Naive thymus-derived CD4-positive, alpha-beta T cell (primary cell): ENCODE measurements at regions of chr22 and their contacts with region 1.

Region 1: DNA sequence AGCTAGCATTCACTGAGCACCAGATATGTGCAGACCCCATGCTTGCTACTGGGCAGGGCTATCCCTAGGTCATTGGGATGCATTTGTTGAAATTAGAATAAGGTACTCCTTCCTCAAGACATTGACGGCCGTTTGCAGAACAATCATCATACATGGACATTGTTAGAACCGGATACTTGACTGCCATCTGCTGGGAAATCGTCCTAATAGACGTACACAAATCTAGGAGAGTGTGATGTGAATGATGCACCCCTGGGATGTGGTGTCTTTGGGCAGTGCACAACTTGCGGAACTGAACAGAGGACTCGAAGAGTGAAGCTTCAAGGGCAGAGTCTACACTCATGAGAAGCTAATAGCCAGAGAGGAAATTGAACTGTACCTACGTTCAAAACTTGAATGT is 35.9 kb downstream of the MYO18B start:
- DNase-seq: no peak
- ATAC-seq: no peak
- H3K4me3 ChIP-seq: no peak overlapping the region
- H3K4me3 Mint-ChIP-seq: no peak overlapping the region
- H3K27ac ChIP-seq: no peak overlapping the region
- H3K27ac Mint-ChIP-seq: no peak overlapping the region
- H3K4me1 ChIP-seq: no peaks in the 10 kb centered on the region
- H3K4me1 Mint-ChIP-seq: peaks cover 0 to 15% (median 3%) of the 10 kb centered on the region in 7 donors
- H3K27me3 ChIP-seq: no peaks in the 10 kb centered on the region
- H3K27me3 Mint-ChIP-seq: peaks cover 0 to 9% (median 4%) of the 10 kb centered on the region in 5 donors

Region 2: GRCh38 chr22:25465949-25466348 is 311.9 kb before region 1 on chr22:
- CTCF ChIA-PET with region 1: interaction called, 8 read pairs
- POLR2A ChIA-PET with region 1: no interaction called
- intact Hi-C with region 1: loop called in 1 of 2 experiments (anchors 1 kb)
- DNase-seq: no peak
- ATAC-seq: no peak
- H3K4me3 ChIP-seq: no peak overlapping the region
- H3K4me3 Mint-ChIP-seq: no peak overlapping the region
- H3K27ac ChIP-seq: no peak overlapping the region
- H3K27ac Mint-ChIP-seq: peak overlapping the region in 1 of 9 donors; percentile 24
- H3K4me1 ChIP-seq: no peaks in the 10 kb centered on the region
- H3K4me1 Mint-ChIP-seq: peaks cover 0 to 16% (median 4%) of the 10 kb centered on the region in 7 donors
- H3K27me3 ChIP-seq: no peaks in the 10 kb centered on the region
- H3K27me3 Mint-ChIP-seq: no peaks in the 10 kb centered on the region

Region 3: GRCh38 chr22:25540166-25540907 is 237.5 kb before region 1 on chr22:
- CTCF ChIA-PET with region 1: no interaction called
- POLR2A ChIA-PET with region 1: no interaction called
- intact Hi-C with region 1: loop called (anchors 1 to 5 kb)
- DNase-seq: no peak
- ATAC-seq: no peak
- H3K4me3 ChIP-seq: no peak overlapping the region
- H3K4me3 Mint-ChIP-seq: no peak overlapping the region
- H3K27ac ChIP-seq: no peak overlapping the region
- H3K27ac Mint-ChIP-seq: no peak overlapping the region
- H3K4me1 ChIP-seq: no peaks in the 10 kb centered on the region
- H3K4me1 Mint-ChIP-seq: peaks cover 0 to 12% (median 0%) of the 10 kb centered on the region in 7 donors
- H3K27me3 ChIP-seq: no peaks in the 10 kb centered on the region
- H3K27me3 Mint-ChIP-seq: peaks cover 0 to 13% (median 6%) of the 10 kb centered on the region in 5 donors

Region 4: GRCh38 chr22:25546751-25547150 is 231.1 kb before region 1 on chr22:
- CTCF ChIA-PET with region 1: no interaction called
- POLR2A ChIA-PET with region 1: no interaction called
- intact Hi-C with region 1: loop called (anchors 1 to 5 kb)
- DNase-seq: no peak
- ATAC-seq: peak; percentile 70
- H3K4me3 ChIP-seq: no peak overlapping the region
- H3K4me3 Mint-ChIP-seq: no peak overlapping the region
- H3K27ac ChIP-seq: no peak overlapping the region
- H3K27ac Mint-ChIP-seq: peak overlapping the region in 1 of 9 donors; percentile 14
- H3K4me1 ChIP-seq: no peaks in the 10 kb centered on the region
- H3K4me1 Mint-ChIP-seq: peaks cover 0 to 45% (median 0%) of the 10 kb centered on the region in 7 donors
- H3K27me3 ChIP-seq: no peaks in the 10 kb centered on the region
- H3K27me3 Mint-ChIP-seq: peaks cover 0 to 11% (median 0%) of the 10 kb centered on the region in 5 donors

Region 5: GRCh38 chr22:25736378-25737011 is 41.4 kb before region 1 on chr22:
- CTCF ChIA-PET with region 1: no interaction called
- POLR2A ChIA-PET with region 1: no interaction called
- intact Hi-C with region 1: loop called in 1 of 2 experiments (anchors 1 kb)
- DNase-seq: peak in 7 of 9 donors; percentile 48 to 66 (median 57)
- ATAC-seq: peak; percentile 36
- H3K4me3 ChIP-seq: peak overlapping the region; percentile 31
- H3K4me3 Mint-ChIP-seq: peak overlapping the region; percentile 47 to 81 (median 70)
- H3K27ac ChIP-seq: no peak overlapping the region
- H3K27ac Mint-ChIP-seq: peak overlapping the region; percentile 51 to 98 (median 84)
- H3K4me1 ChIP-seq: peaks cover 0 to 13% of the 10 kb centered on the region in 2 donors
- H3K4me1 Mint-ChIP-seq: peaks cover 7 to 64% (median 21%) of the 10 kb centered on the region in 7 donors
- H3K27me3 ChIP-seq: no peaks in the 10 kb centered on the region
- H3K27me3 Mint-ChIP-seq: no peaks in the 10 kb centered on the region

Region 6: DNA sequence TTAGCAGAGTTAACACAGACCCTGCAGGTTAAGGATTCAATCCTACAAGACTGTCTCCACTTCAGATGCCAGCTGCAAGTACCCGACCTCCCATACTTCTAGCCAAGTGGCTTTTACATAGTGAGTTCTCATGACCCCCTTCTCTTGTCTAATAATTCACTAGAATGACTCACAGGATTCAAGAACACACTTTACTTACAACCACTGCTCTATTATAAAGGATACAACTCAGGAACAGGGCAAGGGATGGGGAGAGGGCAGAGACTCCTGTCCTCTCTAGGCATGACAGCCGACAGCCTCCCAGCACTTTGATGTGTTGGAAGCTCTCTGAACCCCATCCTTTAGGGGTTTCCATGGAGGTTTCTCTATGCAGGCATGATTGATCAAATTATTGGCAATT is 24.1 kb after region 1 on chr22:
- CTCF ChIA-PET with region 1: no interaction called
- POLR2A ChIA-PET with region 1: no interaction called
- intact Hi-C with region 1: no loop called
- DNase-seq: no peak
- ATAC-seq: no peak
- H3K4me3 ChIP-seq: no peak overlapping the region
- H3K4me3 Mint-ChIP-seq: no peak overlapping the region
- H3K27ac ChIP-seq: no peak overlapping the region
- H3K27ac Mint-ChIP-seq: no peak overlapping the region
- H3K4me1 ChIP-seq: no peaks in the 10 kb centered on the region
- H3K4me1 Mint-ChIP-seq: no peaks in the 10 kb centered on the region
- H3K27me3 ChIP-seq: no peaks in the 10 kb centered on the region
- H3K27me3 Mint-ChIP-seq: peaks cover 0 to 20% (median 13%) of the 10 kb centered on the region in 5 donors

Region 7: GRCh38 chr22:25880524-25880923 is 102.7 kb after region 1 on chr22:
- CTCF ChIA-PET with region 1: no interaction called
- POLR2A ChIA-PET with region 1: no interaction called
- intact Hi-C with region 1: no loop called
- DNase-seq: no peak
- ATAC-seq: no peak
- H3K4me3 ChIP-seq: no peak overlapping the region
- H3K4me3 Mint-ChIP-seq: no peak overlapping the region
- H3K27ac ChIP-seq: no peak overlapping the region
- H3K27ac Mint-ChIP-seq: no peak overlapping the region
- H3K4me1 ChIP-seq: no peaks in the 10 kb centered on the region
- H3K4me1 Mint-ChIP-seq: no peaks in the 10 kb centered on the region
- H3K27me3 ChIP-seq: no peaks in the 10 kb centered on the region
- H3K27me3 Mint-ChIP-seq: peaks cover 12 to 33% (median 25%) of the 10 kb centered on the region in 5 donors